Posterior vena cava (tissue), 2 donors: ENCODE measurements at regions of chr3 and their contacts with region 1.

Region 1: GRCh38 chr3:60497902-60498301 is 753.4 kb downstream of the FHIT start:
- DNase-seq: no peak

Region 2: DNA sequence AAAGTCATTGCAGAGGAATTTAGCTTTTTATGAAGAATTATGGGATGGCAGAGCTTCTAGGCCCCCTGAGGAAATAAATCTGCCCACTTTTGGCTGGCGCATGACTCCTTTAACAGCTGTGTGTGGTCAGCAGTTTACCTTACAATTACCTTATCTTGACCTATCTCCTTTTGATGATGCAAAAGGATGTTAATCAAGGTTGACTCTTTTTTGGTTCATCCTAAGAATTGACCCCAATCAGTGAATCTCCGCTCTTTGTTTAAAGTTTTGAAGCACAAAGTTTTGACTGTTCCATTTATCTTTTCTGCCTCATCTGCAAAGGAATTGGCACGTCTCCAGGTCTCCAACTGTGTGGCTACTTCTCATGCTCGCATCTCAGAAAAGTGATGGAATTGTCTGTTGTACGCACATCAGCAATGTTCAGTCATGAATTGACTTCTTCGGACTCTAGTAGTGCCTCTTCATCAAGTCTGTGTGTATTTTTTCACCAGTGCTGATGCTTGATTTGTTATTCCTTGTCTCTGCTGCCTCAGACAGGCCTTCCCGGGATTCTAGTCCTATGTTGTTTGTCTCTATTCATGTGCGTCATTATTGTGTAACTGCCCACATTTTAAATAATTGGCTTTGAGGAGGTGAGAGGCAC is 1251.9 kb before region 1 on chr3:
- intact Hi-C with region 1: no loop called
- DNase-seq: no peak

Region 3: DNA sequence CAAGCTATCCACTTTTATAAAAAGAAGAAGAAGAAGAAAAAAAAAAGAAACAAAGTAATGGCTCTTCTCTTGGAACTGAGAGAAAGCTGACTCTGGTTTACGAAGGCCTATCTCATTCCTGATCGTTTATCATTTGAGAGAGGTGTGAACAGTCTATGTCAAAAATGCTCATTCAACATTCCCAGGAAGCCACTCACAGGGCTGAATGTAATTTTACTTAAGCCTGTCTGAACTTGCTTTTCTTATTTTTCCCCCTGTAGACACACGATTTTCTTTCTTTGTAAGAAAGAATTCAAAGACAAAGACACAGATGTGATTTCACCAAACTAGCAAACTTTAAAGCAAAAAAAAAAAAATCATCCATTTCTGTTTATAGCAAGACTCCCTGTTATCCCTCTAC is 52.5 kb before region 1 on chr3:
- intact Hi-C with region 1: no loop called
- DNase-seq: no peak

Region 4: DNA sequence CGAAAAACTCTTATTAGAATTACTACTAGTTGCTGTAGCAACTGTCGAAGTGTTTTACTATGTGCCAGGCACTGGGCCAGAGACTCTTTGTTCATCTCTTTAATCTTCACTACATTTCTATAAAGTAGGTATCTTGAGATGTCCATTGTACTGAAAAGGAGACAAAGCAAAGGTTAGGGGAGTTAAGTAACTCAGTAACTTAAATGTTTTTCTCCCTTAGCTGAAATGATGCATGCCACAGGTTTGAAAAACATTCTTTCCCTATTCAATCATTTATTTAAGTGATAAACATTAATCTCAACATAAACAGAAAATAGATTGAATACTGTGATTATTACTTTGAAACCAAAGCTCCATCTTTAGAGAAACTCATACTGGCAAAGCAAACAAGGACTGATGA is 22.8 kb before region 1 on chr3:
- intact Hi-C with region 1: loop called in 1 of 2 experiments (anchors 1 kb)
- DNase-seq: no peak

Region 5: DNA sequence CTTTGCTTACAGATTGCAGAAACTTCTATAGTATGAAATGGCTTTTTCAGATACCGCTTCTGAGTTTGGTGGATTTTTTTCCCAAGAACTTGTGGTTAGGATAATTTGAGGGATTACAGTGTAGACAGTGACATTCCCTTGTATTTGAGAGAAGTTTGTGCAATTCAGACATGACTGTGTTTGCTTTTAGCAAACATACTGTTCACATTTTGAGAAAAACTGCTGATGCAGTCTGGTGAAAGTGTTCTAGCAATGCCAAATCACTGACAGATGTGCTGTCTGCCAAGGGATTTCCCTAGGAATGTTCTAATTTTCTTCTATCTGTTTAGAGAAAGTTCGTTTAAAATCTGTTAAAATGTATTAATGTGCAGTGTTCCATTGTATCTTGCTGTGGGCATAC is 100.8 kb after region 1 on chr3:
- intact Hi-C with region 1: no loop called
- DNase-seq: no peak